ENCODE measurements at regions of chr18 and their contacts with region 1.

Region 1: GRCh38 chr18:31929273-31929672 is 13.7 kb downstream of the TRAPPC8 start:
- DNase-seq: no peak
- ATAC-seq: no peak
- H3K4me3 ChIP-seq: no peak overlapping the region
- H3K4me3 Mint-ChIP-seq: no peak overlapping the region
- H3K27ac ChIP-seq: no peak overlapping the region
- H3K27ac Mint-ChIP-seq: peak overlapping the region; percentile 13
- H3K4me1 ChIP-seq: no peaks in the 10 kb centered on the region
- H3K4me1 Mint-ChIP-seq: peaks cover 30% of the 10 kb centered on the region
- H3K27me3 ChIP-seq: no peaks in the 10 kb centered on the region
- H3K27me3 Mint-ChIP-seq: no peaks in the 10 kb centered on the region
- CTCF ChIP-seq: no peak

Region 2: GRCh38 chr18:31892936-31893335 is 36.3 kb before region 1 on chr18:
- CTCF ChIA-PET with region 1: no interaction called
- POLR2A ChIA-PET with region 1: no interaction called
- intact Hi-C with region 1: loop called in 1 of 2 experiments (anchors 5 kb)
- DNase-seq: no peak
- ATAC-seq: no peak
- H3K4me3 ChIP-seq: no peak overlapping the region
- H3K4me3 Mint-ChIP-seq: no peak overlapping the region
- H3K27ac ChIP-seq: no peak overlapping the region
- H3K27ac Mint-ChIP-seq: no peak overlapping the region
- H3K4me1 ChIP-seq: no peaks in the 10 kb centered on the region
- H3K4me1 Mint-ChIP-seq: no peaks in the 10 kb centered on the region
- H3K27me3 ChIP-seq: no peaks in the 10 kb centered on the region
- H3K27me3 Mint-ChIP-seq: no peaks in the 10 kb centered on the region
- CTCF ChIP-seq: no peak